GM18951 (cell line): ENCODE measurements at regions of chr1 and their contacts with region 1.

Region 1: GRCh38 chr1:179002552-179003345 is 22.9 kb upstream of the FAM20B start:
- POLR2A ChIP-seq: no peak

Region 2: GRCh38 chr1:178532392-178532791 is 470.4 kb before region 1 on chr1:
- in situ Hi-C with region 1: loop called (anchors 10 kb)
- POLR2A ChIP-seq: no peak

Region 3: GRCh38 chr1:178962853-178963711 is 39.7 kb before region 1 on chr1:
- in situ Hi-C with region 1: no loop called
- POLR2A ChIP-seq: no peak